OCI-LY7 (cell line): ENCODE measurements at regions of chr1 and their contacts with region 1.

Region 1: GRCh38 chr1:11478571-11479374 is at the start of gene DISP3:
- DNase-seq: peak; percentile 89
- H3K4me3 ChIP-seq: peak within 1 kb of the TSS; percentile 70
- H3K27ac ChIP-seq: no peak within 1 kb of the TSS
- H3K4me1 ChIP-seq: no peaks in the 10 kb centered on the region
- CTCF ChIP-seq: peak; percentile 79
- total RNA-seq, gene DISP3: 0.13 and 1.7 TPM in 2 replicates

Region 2: DNA sequence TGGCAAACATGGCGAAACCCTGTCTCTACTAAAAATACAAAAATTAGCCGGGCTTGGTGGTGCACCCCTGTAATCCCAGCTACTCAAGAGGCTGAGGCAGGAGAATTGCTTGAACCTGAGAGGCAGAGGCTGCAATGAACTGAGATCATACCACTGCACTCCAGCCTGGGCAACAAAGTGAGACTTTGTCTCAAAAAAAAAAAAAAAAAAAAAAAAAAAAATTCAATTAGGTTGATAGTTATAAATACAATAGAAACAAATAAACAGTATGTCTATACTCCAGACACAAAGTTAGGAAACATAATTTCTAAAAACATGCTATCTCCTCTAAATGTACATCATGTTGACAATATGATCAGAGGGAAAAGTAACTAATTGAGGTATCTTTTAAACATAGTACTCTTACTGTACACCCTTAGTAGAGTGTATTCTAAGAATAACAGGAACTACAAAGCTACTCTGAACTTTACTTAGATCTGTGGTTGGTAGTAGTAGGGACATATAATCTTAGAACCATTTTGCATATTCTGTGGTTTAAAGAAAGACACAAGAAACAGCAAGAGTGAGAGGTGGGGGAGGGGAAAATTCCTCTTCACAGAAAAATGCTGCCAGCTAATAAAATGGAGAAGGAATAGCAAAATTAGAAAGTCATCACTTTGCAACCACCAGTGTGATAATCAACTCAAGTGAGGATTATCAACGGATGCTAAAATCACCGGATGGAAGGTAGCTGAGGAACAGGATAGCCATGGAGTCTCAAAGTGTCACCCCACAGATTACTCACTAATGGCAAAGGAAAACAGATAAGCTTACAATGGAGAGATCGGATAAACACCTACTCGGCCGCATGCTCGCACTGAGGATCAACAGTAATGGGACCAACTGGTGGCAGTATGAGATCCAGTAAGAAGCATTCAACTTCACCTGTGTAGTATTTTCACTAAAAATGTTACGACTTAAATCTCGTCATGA is 251.4 kb before region 1 on chr1:
- CTCF ChIA-PET with region 1: no interaction called
- POLR2A ChIA-PET with region 1: no interaction called
- intact Hi-C with region 1: no loop called
- DNase-seq: peak; percentile 73
- H3K4me3 ChIP-seq: peak overlapping the region; percentile 33
- H3K27ac ChIP-seq: peak overlapping the region; percentile 86
- H3K4me1 ChIP-seq: peaks cover 51% of the 10 kb centered on the region
- CTCF ChIP-seq: no peak

Region 3: DNA sequence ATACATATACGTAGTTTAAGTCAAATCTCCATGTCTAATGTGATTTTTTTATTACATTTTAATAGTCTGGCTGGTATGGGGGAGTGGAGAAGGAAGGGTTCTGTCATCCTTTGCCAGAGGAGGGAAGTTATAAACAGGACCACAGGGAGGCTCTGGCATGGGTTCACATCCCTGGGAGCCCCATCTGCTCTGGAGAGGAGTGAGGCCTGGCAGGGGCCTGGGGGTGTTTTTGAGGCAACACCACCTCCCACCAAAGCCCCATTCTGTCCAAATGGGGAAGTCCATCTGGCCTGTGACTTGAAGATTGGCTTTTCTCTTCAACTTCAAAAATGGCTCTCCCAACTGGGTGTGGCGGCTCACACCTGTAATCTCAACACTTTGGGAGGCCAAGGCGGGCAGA is 16.0 kb after region 1 on chr1:
- CTCF ChIA-PET with region 1: no interaction called
- POLR2A ChIA-PET with region 1: no interaction called
- intact Hi-C with region 1: no loop called
- DNase-seq: no peak
- H3K4me3 ChIP-seq: no peak overlapping the region
- H3K27ac ChIP-seq: no peak overlapping the region
- H3K4me1 ChIP-seq: no peaks in the 10 kb centered on the region
- CTCF ChIP-seq: no peak

Region 4: GRCh38 chr1:11638122-11638521 is 159.3 kb after region 1 on chr1:
- CTCF ChIA-PET with region 1: no interaction called
- POLR2A ChIA-PET with region 1: no interaction called
- intact Hi-C with region 1: loop called (anchors 2 kb)
- DNase-seq: no peak
- H3K4me3 ChIP-seq: no peak overlapping the region
- H3K27ac ChIP-seq: no peak overlapping the region
- H3K4me1 ChIP-seq: peaks cover 7% of the 10 kb centered on the region
- CTCF ChIP-seq: no peak